Activated CD8-positive, alpha-beta memory T cell treated with anti-CD3 and anti-CD28 coated beads, Interleukin-2, amount 10 ng/mL, durations not matched to agents 7 days and 5 days (primary cell): ENCODE measurements at regions of chr1 and their contacts with region 1.

Region 1: DNA sequence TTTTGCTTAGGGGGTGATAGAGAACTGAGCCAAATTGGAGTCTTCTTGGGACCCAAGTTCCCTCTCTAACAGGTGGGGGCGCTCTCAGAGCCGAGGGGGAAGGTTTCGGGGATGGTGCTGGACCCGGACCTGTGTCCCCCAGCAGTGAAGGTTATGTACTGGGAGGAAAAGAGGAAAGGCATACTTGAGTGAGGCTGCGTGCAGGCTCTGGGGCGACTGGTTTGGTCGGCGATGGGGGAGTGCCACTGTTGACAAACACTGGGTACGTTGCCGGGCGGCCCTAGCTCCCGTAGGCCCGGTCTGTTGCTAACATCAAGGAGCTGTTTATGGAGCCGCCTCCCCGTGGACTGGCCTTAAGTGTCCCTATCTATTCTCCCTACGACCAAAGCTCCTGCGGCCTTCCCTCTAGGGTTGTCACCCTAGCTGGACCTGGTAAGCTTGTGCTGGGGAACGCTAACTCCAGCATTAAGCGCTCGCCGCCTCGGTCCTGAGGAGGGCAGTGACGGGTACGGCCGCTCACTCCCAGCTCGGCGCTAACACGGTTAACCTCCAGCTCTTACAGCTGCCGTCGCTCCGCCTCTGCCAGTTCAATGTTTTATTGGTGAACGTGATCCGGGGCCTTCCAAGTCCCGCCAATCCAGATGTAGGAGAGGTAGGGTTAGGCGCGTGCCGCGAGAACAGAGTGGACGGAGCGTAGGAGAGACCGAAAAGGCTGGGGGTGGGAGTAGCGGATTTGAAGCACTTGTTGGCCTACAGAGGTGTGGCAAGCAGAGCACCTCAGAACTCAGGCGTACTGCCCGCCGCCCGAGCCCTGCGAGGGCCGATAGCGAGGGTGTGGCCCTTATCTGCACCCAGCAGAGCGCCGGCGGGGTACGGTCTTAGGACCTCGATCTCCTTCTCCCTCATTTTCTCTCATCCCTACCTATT is at the start of gene PPOX:
- DNase-seq: peak; percentile 98
- ATAC-seq: peak; percentile 95
- H3K4me3 Mint-ChIP-seq: peak within 1 kb of the TSS; percentile 83
- H3K27ac Mint-ChIP-seq: peak within 1 kb of the TSS; percentile 95
- H3K4me1 Mint-ChIP-seq: peaks cover 44% of the 10 kb centered on the region
- H3K27me3 Mint-ChIP-seq: no peaks in the 10 kb centered on the region
- total RNA-seq, gene PPOX: 34.5 to 43.9 TPM

Region 2: DNA sequence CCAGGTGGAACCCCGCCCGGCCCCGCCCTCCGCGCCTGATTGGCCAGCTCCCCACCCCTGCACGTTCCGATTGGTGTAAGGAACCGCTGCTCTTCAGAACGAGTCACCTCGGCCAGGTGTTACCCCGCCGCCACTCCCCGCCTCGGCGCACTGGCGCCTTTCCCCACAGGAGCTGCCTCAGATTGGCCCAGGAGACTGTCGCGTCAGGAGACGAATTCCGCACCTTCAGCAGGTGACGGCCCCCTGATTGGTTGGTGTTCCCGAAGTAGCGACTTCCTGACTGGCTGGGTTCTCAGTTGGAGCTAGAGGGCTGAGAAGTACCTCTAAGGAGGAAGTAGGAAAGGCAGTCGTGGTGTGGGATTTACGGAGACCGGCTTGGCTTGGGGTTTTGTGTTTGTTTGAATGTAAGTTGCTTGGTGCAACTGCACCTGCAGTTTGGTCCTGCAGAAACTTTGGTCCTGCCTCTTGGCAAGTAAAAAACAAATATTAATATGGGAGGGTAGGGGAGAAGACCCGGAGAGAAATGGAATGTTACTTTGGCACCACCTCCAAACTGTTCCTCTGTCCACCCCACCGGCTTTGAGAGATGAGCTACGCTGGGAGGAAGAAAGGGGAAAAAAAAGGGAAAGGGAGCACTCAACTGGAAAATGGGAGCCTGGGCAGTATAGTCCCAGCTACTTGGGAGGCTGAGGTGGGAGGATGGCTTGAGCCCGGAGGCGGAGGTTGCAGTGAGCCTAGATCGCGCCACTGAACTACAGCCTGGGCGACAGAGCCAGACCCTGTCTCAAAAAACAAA is 144.6 kb before region 1 on chr1:
- CTCF ChIA-PET with region 1: no interaction called
- DNase-seq: peak; percentile 90
- ATAC-seq: peak; percentile 96
- H3K4me3 Mint-ChIP-seq: peak overlapping the region; percentile 82
- H3K27ac Mint-ChIP-seq: peak overlapping the region; percentile 86
- H3K4me1 Mint-ChIP-seq: peaks cover 32% of the 10 kb centered on the region
- H3K27me3 Mint-ChIP-seq: no peaks in the 10 kb centered on the region

Region 3: GRCh38 chr1:161153679-161154426 is 12.2 kb before region 1 on chr1 and contains the start of gene UFC1:
- CTCF ChIA-PET with region 1: interaction called, 41 read pairs
- DNase-seq: peak; percentile 92
- ATAC-seq: peak; percentile 95
- H3K4me3 Mint-ChIP-seq: peak within 1 kb of the TSS; percentile 99
- H3K27ac Mint-ChIP-seq: peak within 1 kb of the TSS; percentile 100
- H3K4me1 Mint-ChIP-seq: peaks cover 24% of the 10 kb centered on the region
- H3K27me3 Mint-ChIP-seq: no peaks in the 10 kb centered on the region
- total RNA-seq, gene UFC1: 90.7 to 98.4 TPM

Region 4: GRCh38 chr1:161177112-161177935 is 11.3 kb after region 1 on chr1 and contains the start of gene B4GALT3:
- CTCF ChIA-PET with region 1: interaction called, 49 read pairs
- DNase-seq: peak; percentile 94
- ATAC-seq: peak; percentile 92
- H3K4me3 Mint-ChIP-seq: peak within 1 kb of the TSS; percentile 99
- H3K27ac Mint-ChIP-seq: peak within 1 kb of the TSS; percentile 99
- H3K4me1 Mint-ChIP-seq: peaks cover 58% of the 10 kb centered on the region
- H3K27me3 Mint-ChIP-seq: no peaks in the 10 kb centered on the region
- total RNA-seq, gene B4GALT3: 47.0 to 53.5 TPM

Region 5: DNA sequence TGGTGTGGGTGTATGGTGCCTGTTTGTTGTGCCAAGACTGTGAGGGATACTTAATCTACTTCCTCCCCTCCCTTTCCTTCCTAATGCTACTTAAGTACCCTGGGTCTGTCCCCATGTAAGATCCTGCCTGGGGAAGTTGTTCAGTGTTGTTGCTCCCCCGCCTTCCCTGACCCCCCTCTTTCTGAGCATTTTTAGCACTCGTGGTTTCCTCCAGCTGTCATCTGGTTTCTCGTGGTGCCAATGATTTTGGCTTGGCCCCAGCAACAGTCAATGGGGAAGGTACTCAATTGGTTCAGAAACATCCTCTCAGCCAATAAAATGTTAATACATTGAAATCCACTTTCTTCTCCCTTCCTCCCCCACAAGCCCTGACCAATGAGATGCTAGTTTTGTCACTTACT is 19.3 kb after region 1 on chr1:
- CTCF ChIA-PET with region 1: interaction called, 49 read pairs
- DNase-seq: peak; percentile 93
- ATAC-seq: peak; percentile 80
- H3K4me3 Mint-ChIP-seq: peak overlapping the region; percentile 61
- H3K27ac Mint-ChIP-seq: peak overlapping the region; percentile 96
- H3K4me1 Mint-ChIP-seq: peaks cover 75% of the 10 kb centered on the region
- H3K27me3 Mint-ChIP-seq: no peaks in the 10 kb centered on the region

Region 6: DNA sequence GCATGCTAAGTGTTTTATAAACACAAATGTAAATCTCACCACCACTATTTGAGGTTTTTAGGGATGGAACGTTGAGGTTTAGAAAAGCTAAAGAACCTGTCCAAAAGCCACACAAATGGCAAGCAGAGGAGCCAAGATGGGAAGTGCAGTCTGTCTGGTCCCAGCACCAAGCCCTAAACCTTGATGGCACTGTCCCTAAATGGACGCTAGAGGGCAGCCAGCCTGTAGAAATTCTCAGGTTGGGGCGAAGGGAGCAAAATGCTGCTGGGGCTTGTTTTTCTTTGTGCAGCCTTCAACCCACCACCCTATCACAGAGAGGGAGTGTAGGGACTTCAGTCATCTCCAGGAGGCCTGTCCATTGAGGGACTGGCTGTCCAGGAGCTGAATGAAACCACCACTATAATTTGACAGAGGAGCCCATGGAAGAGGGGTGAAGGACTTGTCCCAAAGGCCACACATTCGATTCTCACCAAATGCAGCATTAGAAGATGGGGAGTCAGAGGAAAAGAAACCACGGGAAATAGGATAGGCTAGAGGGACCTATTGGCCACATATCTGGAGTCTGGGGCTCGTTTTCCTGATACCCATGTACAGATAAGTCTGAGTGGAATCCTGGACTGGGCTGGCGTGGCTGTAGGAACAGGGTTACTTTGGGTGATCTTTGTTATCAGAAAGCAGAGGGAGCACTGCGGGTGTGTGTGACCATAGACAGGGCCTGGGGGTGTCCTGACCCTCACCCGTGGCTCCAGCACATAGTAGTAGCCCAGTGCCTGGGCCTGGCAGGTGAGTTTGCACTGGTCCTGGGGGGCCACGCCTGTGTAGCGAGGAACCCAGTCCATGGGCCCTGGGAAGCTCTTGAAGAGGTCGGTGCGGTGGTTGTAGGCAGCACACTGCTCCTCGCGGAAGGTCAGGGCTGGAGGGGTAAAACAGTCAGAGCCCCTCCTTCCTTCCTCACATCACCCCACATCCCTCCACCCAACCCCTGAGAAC is 26.8 kb after region 1 on chr1:
- CTCF ChIA-PET with region 1: interaction called, 19 read pairs
- DNase-seq: peak; percentile 82
- ATAC-seq: peak; percentile 94
- H3K4me3 Mint-ChIP-seq: no peak overlapping the region
- H3K27ac Mint-ChIP-seq: peak overlapping the region; percentile 83
- H3K4me1 Mint-ChIP-seq: peaks cover 42% of the 10 kb centered on the region
- H3K27me3 Mint-ChIP-seq: no peaks in the 10 kb centered on the region

Region 7: GRCh38 chr1:161201828-161202725 is 36.1 kb after region 1 on chr1 and contains the start of gene NDUFS2:
- CTCF ChIA-PET with region 1: interaction called, 16 read pairs
- DNase-seq: peak; percentile 99
- ATAC-seq: peak; percentile 99
- H3K4me3 Mint-ChIP-seq: peak within 1 kb of the TSS; percentile 87
- H3K27ac Mint-ChIP-seq: peak within 1 kb of the TSS; percentile 95
- H3K4me1 Mint-ChIP-seq: peaks cover 64% of the 10 kb centered on the region
- H3K27me3 Mint-ChIP-seq: no peaks in the 10 kb centered on the region
- total RNA-seq, gene NDUFS2: 69.4 to 83.9 TPM

Region 8: DNA sequence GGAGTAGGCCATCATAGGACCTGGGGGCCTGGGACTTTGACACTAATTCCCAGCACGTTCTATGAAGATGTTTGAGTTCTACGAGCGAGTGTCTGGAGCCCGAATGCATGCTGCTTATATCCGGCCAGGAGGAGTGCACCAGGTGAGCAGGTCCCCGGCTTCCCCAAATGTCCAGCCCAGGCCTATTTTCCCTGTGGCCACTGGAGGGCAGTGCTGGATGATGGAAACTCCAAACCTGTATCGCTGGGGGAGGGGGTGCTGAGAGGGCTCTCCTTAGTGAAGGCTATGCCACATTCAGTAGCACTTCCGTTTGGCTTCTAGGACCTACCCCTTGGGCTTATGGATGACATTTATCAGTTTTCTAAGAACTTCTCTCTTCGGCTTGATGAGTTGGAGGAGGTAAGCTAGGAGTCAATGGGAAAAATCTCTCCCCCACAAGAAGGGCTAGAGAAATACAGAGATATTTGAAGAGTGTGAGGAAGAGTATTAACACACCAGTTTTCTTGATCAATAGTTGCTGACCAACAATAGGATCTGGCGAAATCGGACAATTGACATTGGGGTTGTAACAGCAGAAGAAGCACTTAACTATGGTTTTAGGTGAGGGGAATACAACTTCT is 43.9 kb after region 1 on chr1:
- CTCF ChIA-PET with region 1: interaction called, 11 read pairs
- DNase-seq: peak; percentile 82
- ATAC-seq: peak; percentile 90
- H3K4me3 Mint-ChIP-seq: no peak overlapping the region
- H3K27ac Mint-ChIP-seq: peak overlapping the region; percentile 57
- H3K4me1 Mint-ChIP-seq: peaks cover 32% of the 10 kb centered on the region
- H3K27me3 Mint-ChIP-seq: no peaks in the 10 kb centered on the region